AG04449 (cell line): ENCODE measurements at regions of chr11 and their contacts with region 1.

Region 1: DNA sequence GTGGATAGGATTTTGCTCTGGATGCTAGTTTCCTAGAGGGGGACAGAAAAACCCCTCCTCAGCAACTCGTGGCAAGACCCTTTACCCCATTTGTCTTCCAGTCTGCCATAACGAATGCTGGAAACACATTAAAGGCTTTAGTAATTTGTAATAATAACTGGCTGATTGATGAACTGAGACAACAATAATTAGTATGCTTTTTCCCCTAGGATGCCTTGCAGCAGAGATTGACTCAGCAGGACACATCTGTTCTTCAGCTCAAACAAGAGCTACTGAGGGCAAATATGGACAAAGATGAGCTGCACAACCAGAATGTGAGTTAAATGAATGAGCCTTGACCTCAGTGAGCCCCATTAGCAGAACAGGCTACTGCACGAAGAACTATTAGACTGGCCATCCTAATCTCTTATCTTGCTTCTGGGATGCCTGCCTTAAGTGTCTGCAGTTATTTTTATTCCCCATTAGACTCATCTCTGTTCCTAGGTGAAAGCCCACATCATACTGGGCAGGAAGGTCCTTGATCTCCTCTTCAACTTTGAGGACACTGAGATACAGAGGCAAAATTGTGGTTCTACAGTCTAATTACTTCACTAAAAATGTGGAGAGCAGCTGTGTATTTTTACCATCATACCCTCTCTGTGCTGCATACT is 32.9 kb upstream of the DLAT start:
- DNase-seq: no peak
- H3K4me3 ChIP-seq: no peak overlapping the region
- CTCF ChIP-seq: no peak

Region 2: GRCh38 chr11:111652184-111652583 is 340.1 kb before region 1 on chr11:
- CTCF ChIA-PET with region 1: no interaction called
- POLR2A ChIA-PET with region 1: no interaction called
- DNase-seq: no peak
- H3K4me3 ChIP-seq: no peak overlapping the region
- CTCF ChIP-seq: no peak

Region 3: GRCh38 chr11:111665777-111666176 is 326.6 kb before region 1 on chr11:
- CTCF ChIA-PET with region 1: no interaction called
- POLR2A ChIA-PET with region 1: no interaction called
- DNase-seq: no peak
- H3K4me3 ChIP-seq: no peak overlapping the region
- CTCF ChIP-seq: no peak

Region 4: DNA sequence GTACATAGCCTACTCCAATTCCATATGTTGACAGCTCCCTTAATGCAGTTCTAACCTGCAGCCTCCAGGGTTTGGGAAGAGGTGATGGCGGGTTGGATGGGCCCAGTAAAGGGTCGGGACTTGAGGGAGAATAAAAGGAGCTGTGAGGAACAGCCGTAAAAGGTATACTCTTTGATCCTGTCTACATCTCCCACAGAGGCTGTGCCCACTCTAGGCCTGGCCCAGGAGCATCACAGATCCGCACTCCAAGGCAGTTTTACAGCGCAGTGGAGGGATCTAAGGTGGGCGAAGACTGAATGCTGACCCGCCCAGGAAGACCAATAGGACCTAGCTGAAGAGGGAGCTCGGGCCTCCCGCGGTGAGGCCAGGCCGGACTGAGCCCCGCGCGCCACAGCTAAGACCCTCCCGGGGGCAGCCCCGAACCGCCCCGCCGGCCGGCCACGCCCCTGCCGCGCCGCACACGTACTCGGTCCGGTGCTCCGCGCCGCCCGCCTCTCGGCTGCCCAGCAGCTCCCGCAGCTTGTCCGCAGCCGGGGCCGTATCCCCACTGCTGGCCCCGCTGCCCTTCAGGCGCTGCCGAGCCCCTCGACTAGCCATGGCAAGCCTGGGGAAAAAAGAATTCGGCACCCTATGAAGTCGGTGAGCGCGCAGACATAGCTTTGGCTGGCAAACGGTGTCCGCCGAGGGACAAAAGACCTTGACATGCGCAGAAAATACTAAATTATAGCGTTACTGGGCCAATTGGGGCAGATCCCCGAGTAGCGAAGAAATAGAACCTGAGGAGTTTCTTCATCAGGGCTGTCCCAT is 121.2 kb before region 1 on chr11 and contains the start of gene ALG9:
- CTCF ChIA-PET with region 1: interaction called, 24 read pairs
- POLR2A ChIA-PET with region 1: no interaction called
- DNase-seq: peak; percentile 24
- H3K4me3 ChIP-seq: peak within 1 kb of the TSS; percentile 90
- CTCF ChIP-seq: peak; percentile 43

Region 5: GRCh38 chr11:111878849-111879636 is 113.3 kb before region 1 on chr11 and contains the starts of genes CFAP68 and FDXACB1:
- CTCF ChIA-PET with region 1: interaction called, 11 read pairs
- POLR2A ChIA-PET with region 1: no interaction called
- DNase-seq: peak; percentile 76
- H3K4me3 ChIP-seq: peak within 1 kb of the TSS; percentile 94
- CTCF ChIP-seq: peak; percentile 95

Region 6: GRCh38 chr11:111938687-111939160 is 53.6 kb before region 1 on chr11:
- CTCF ChIA-PET with region 1: interaction called, 102 read pairs
- POLR2A ChIA-PET with region 1: no interaction called
- DNase-seq: no peak
- H3K4me3 ChIP-seq: peak overlapping the region; percentile 69
- CTCF ChIP-seq: no peak